MCF 10A (cell line): ENCODE measurements at regions of chr11 and their contacts with region 1.

Region 1: GRCh38 chr11:100403817-100404216 is 283.3 kb upstream of the ARHGAP42 start:
- DNase-seq: no peak
- H3K4me3 Mint-ChIP-seq: no peak overlapping the region
- H3K27ac Mint-ChIP-seq: no peak overlapping the region
- H3K4me1 Mint-ChIP-seq: no peaks in the 10 kb centered on the region
- H3K27me3 Mint-ChIP-seq: no peaks in the 10 kb centered on the region
- CTCF ChIP-seq: no peak

Region 2: GRCh38 chr11:99893811-99894210 is 510.0 kb before region 1 on chr11:
- CTCF ChIA-PET with region 1: no interaction called
- POLR2A ChIA-PET with region 1: no interaction called
- intact Hi-C with region 1: loop called (anchors 10 kb)
- DNase-seq: no peak
- H3K4me3 Mint-ChIP-seq: no peak overlapping the region
- H3K27ac Mint-ChIP-seq: no peak overlapping the region
- H3K4me1 Mint-ChIP-seq: no peaks in the 10 kb centered on the region
- H3K27me3 Mint-ChIP-seq: no peaks in the 10 kb centered on the region
- CTCF ChIP-seq: no peak

Region 3: GRCh38 chr11:100240025-100240539 is 163.7 kb before region 1 on chr11:
- CTCF ChIA-PET with region 1: no interaction called
- POLR2A ChIA-PET with region 1: no interaction called
- intact Hi-C with region 1: no loop called
- DNase-seq: no peak
- H3K4me3 Mint-ChIP-seq: no peak overlapping the region
- H3K27ac Mint-ChIP-seq: no peak overlapping the region
- H3K4me1 Mint-ChIP-seq: no peaks in the 10 kb centered on the region
- H3K27me3 Mint-ChIP-seq: no peaks in the 10 kb centered on the region
- CTCF ChIP-seq: no peak

Region 4: GRCh38 chr11:100340416-100341323 is 63.1 kb before region 1 on chr11:
- CTCF ChIA-PET with region 1: no interaction called
- POLR2A ChIA-PET with region 1: no interaction called
- intact Hi-C with region 1: no loop called
- DNase-seq: no peak
- H3K4me3 Mint-ChIP-seq: no peak overlapping the region
- H3K27ac Mint-ChIP-seq: no peak overlapping the region
- H3K4me1 Mint-ChIP-seq: no peaks in the 10 kb centered on the region
- H3K27me3 Mint-ChIP-seq: peaks cover 20% of the 10 kb centered on the region
- CTCF ChIP-seq: no peak